B cell (primary cell): ENCODE measurements at regions of chr1 and their contacts with region 1.

Region 1: DNA sequence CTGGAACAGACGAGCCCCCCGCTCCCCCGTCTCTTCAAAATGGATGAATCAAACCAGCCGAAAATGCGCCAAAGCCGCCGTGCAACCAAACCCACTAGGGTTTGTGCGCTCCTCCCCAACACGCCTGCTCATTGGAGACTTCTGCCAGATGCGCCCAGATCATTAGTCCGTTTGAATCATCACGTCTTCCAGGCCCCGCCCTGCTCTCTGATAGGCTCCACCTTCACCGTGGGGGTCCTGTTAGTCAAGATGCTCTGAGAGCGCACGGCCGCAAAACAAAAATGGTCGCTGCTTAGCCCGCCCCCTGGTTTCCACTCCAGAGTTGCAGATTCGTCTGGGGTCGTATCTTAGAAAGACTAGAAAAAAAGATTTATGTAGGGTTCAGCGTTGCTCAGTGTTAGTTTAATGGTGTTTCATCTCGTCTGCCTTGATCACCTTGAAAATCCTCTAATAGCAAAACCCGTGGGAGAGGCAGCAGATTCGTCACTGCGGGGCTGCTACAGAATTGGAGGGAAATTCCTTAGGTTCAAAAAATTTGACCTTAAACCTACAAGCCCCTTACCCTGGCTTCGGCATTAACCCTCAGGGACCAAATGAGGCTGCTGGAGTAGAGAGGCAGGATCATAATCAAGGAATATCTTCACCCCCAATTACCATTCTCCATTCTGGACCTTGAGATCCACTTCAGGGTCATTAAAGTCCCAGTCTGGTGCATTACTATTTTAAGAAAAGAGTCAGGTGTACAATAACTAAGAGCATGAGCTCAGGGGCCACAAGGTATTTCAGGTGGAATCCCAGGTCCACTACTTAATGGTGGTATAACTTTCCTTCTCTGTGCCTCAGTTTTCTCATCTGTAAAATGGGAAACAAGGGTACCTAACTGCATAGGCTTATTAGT is at the start of gene NUCKS1:
- DNase-seq: peak; percentile 98
- ATAC-seq: peak; percentile 80
- H3K4me3 ChIP-seq: peak within 1 kb of the TSS; percentile 61 to 97 (median 88)
- H3K4me3 Mint-ChIP-seq: peak within 1 kb of the TSS; percentile 95
- H3K27ac ChIP-seq: peak within 1 kb of the TSS; percentile 83 to 95
- H3K27ac Mint-ChIP-seq: peak within 1 kb of the TSS; percentile 97
- H3K4me1 ChIP-seq: peaks cover 22 to 29% of the 10 kb centered on the region in 2 donors
- H3K4me1 Mint-ChIP-seq: peaks cover 33% of the 10 kb centered on the region
- H3K27me3 ChIP-seq: no peaks in the 10 kb centered on the region
- H3K27me3 Mint-ChIP-seq: no peaks in the 10 kb centered on the region
- CTCF ChIP-seq: no peak
- total RNA-seq, gene NUCKS1: 87.6 and 90.1 TPM in 2 replicates

Region 2: GRCh38 chr1:205121660-205122488 is 628.5 kb before region 1 on chr1 and contains the start of gene RBBP5:
- CTCF ChIA-PET with region 1: interaction called, 4 read pairs
- POLR2A ChIA-PET with region 1: no interaction called
- intact Hi-C with region 1: loop called (anchors 10 kb)
- DNase-seq: peak; percentile 99
- ATAC-seq: peak; percentile 93
- H3K4me3 ChIP-seq: peak within 1 kb of the TSS; percentile 74 to 99 (median 87)
- H3K4me3 Mint-ChIP-seq: peak within 1 kb of the TSS; percentile 98
- H3K27ac ChIP-seq: peak within 1 kb of the TSS; percentile 95 to 96
- H3K27ac Mint-ChIP-seq: peak within 1 kb of the TSS; percentile 100
- H3K4me1 ChIP-seq: peaks cover 31 to 40% of the 10 kb centered on the region in 2 donors
- H3K4me1 Mint-ChIP-seq: peaks cover 48% of the 10 kb centered on the region
- H3K27me3 ChIP-seq: no peaks in the 10 kb centered on the region
- H3K27me3 Mint-ChIP-seq: no peaks in the 10 kb centered on the region
- CTCF ChIP-seq: peak; percentile 73
- total RNA-seq, gene RBBP5: 18.5 and 31.7 TPM in 2 replicates

Region 3: DNA sequence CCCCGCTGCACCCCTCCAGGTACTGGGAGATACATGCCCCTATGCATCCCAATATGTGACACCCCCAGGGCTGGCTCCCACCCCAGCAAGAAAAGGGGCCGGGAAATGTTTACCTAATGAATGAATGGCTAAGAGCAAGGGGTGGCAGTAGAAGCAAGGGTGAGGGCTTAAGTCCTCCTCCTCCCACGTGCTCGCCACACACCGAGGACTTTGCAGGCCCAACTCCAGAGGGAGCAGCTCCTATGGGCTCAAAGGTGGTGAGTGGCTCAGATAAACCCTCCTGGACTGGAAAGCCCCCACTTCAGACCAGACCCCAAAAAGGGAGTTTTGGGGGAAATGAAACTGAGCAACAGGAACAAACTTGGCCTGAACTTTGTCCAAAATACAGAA is 81.4 kb before region 1 on chr1:
- CTCF ChIA-PET with region 1: no interaction called
- POLR2A ChIA-PET with region 1: no interaction called
- intact Hi-C with region 1: loop called (anchors 2 kb)
- DNase-seq: peak; percentile 88
- ATAC-seq: peak; percentile 68
- H3K4me3 ChIP-seq: peak overlapping the region in 2 of 5 experiments; percentile 29 to 47
- H3K4me3 Mint-ChIP-seq: peak overlapping the region; percentile 74
- H3K27ac ChIP-seq: peak overlapping the region; percentile 89 to 93
- H3K27ac Mint-ChIP-seq: peak overlapping the region; percentile 88
- H3K4me1 ChIP-seq: peaks cover 86 to 92% of the 10 kb centered on the region in 2 donors
- H3K4me1 Mint-ChIP-seq: peaks cover 78% of the 10 kb centered on the region
- H3K27me3 ChIP-seq: no peaks in the 10 kb centered on the region
- H3K27me3 Mint-ChIP-seq: no peaks in the 10 kb centered on the region
- CTCF ChIP-seq: peak; percentile 26

Region 4: GRCh38 chr1:205775015-205775716 is 24.8 kb after region 1 on chr1 and contains the start of gene RAB29:
- CTCF ChIA-PET with region 1: no interaction called
- POLR2A ChIA-PET with region 1: interaction called, 17 read pairs
- intact Hi-C with region 1: loop called (anchors 1 kb)
- DNase-seq: peak; percentile 94
- ATAC-seq: peak; percentile 89
- H3K4me3 ChIP-seq: peak within 1 kb of the TSS; percentile 73 to 89 (median 86)
- H3K4me3 Mint-ChIP-seq: peak within 1 kb of the TSS; percentile 98
- H3K27ac ChIP-seq: peak within 1 kb of the TSS; percentile 93 to 96
- H3K27ac Mint-ChIP-seq: peak within 1 kb of the TSS; percentile 99
- H3K4me1 ChIP-seq: peaks cover 44 to 48% of the 10 kb centered on the region in 2 donors
- H3K4me1 Mint-ChIP-seq: peaks cover 54% of the 10 kb centered on the region
- H3K27me3 ChIP-seq: no peaks in the 10 kb centered on the region
- H3K27me3 Mint-ChIP-seq: no peaks in the 10 kb centered on the region
- CTCF ChIP-seq: no peak
- total RNA-seq, gene RAB29: 59.7 and 61.4 TPM in 2 replicates

Region 5: GRCh38 chr1:205812878-205813754 is 62.7 kb after region 1 on chr1 and contains the start of gene SLC41A1:
- CTCF ChIA-PET with region 1: interaction called, 3 read pairs
- POLR2A ChIA-PET with region 1: interaction called, 3 read pairs
- intact Hi-C with region 1: loop called (anchors 1 kb)
- DNase-seq: peak; percentile 96
- ATAC-seq: peak; percentile 96
- H3K4me3 ChIP-seq: peak within 1 kb of the TSS; percentile 52 to 83 (median 80)
- H3K4me3 Mint-ChIP-seq: peak within 1 kb of the TSS; percentile 96
- H3K27ac ChIP-seq: peak within 1 kb of the TSS; percentile 60 to 77
- H3K27ac Mint-ChIP-seq: peak within 1 kb of the TSS; percentile 92
- H3K4me1 ChIP-seq: peaks cover 33 to 46% of the 10 kb centered on the region in 2 donors
- H3K4me1 Mint-ChIP-seq: peaks cover 51% of the 10 kb centered on the region
- H3K27me3 ChIP-seq: no peaks in the 10 kb centered on the region
- H3K27me3 Mint-ChIP-seq: no peaks in the 10 kb centered on the region
- CTCF ChIP-seq: no peak
- total RNA-seq, gene SLC41A1: 24.2 and 24.7 TPM in 2 replicates

Region 6: DNA sequence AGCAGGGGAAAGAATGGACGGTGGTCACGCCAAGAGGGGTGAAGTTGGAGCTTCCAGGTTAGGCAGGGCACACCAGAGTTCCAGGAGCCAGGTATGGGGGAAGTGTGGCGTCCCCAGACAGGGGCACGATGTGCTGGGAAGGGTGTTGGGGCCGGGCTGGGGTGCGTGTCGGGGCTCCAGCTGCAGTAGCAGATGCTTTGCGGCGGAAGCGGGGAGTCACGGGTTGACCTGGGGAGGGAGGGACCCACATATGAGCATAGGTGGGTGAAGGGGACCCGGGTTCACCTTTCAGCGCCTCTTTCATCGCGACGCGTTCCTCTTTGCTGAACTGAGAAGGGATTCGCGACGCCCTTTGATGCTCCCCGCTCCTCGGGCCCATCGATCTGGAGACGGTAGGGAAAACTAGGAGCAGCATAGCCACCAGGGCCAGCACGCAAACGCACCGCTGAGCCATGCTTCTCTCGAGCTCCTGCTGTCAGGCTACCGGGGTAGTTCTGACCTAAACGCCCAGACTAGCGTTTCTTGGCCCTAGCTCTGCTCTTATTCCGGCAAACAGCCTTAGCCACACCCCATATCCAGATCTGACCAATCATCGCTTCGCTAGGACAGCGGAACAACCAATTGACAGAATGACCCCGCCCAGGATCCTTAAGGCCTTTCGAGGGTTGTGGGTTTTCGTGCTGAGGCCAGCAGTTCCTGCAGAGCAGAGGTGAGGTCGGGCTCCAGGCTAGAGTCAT is 99.4 kb after region 1 on chr1 and contains the start of gene PM20D1:
- CTCF ChIA-PET with region 1: no interaction called
- POLR2A ChIA-PET with region 1: interaction called, 4 read pairs
- intact Hi-C with region 1: loop called (anchors 1 kb)
- DNase-seq: peak; percentile 91
- ATAC-seq: peak; percentile 99
- H3K4me3 ChIP-seq: peak within 1 kb of the TSS in 4 of 5 experiments; percentile 57 to 65 (median 62)
- H3K4me3 Mint-ChIP-seq: peak within 1 kb of the TSS; percentile 96
- H3K27ac ChIP-seq: peak within 1 kb of the TSS; percentile 70 to 88
- H3K27ac Mint-ChIP-seq: peak within 1 kb of the TSS; percentile 96
- H3K4me1 ChIP-seq: peaks cover 7 to 9% of the 10 kb centered on the region in 2 donors
- H3K4me1 Mint-ChIP-seq: peaks cover 15% of the 10 kb centered on the region
- H3K27me3 ChIP-seq: no peaks in the 10 kb centered on the region
- H3K27me3 Mint-ChIP-seq: no peaks in the 10 kb centered on the region
- CTCF ChIP-seq: no peak
- total RNA-seq, gene PM20D1: 2.3 and 3.3 TPM in 2 replicates

Region 7: GRCh38 chr1:206012086-206012859 is 261.9 kb after region 1 on chr1:
- CTCF ChIA-PET with region 1: no interaction called
- POLR2A ChIA-PET with region 1: no interaction called
- intact Hi-C with region 1: loop called (anchors 1 kb)
- DNase-seq: peak; percentile 93
- ATAC-seq: peak; percentile 99
- H3K4me3 ChIP-seq: peak overlapping the region in 4 of 5 experiments; percentile 23 to 55 (median 44)
- H3K4me3 Mint-ChIP-seq: peak overlapping the region; percentile 81
- H3K27ac ChIP-seq: peak overlapping the region; percentile 77 to 87
- H3K27ac Mint-ChIP-seq: peak overlapping the region; percentile 95
- H3K4me1 ChIP-seq: peaks cover 21 to 24% of the 10 kb centered on the region in 2 donors
- H3K4me1 Mint-ChIP-seq: peaks cover 32% of the 10 kb centered on the region
- H3K27me3 ChIP-seq: no peaks in the 10 kb centered on the region
- H3K27me3 Mint-ChIP-seq: no peaks in the 10 kb centered on the region
- CTCF ChIP-seq: peak; percentile 25